Activated naive CD4-positive, alpha-beta T cell treated with anti-CD3 and anti-CD28 coated beads for 36 hours (primary cell): ENCODE measurements at regions of chr5 and their contacts with region 1.

Region 1: DNA sequence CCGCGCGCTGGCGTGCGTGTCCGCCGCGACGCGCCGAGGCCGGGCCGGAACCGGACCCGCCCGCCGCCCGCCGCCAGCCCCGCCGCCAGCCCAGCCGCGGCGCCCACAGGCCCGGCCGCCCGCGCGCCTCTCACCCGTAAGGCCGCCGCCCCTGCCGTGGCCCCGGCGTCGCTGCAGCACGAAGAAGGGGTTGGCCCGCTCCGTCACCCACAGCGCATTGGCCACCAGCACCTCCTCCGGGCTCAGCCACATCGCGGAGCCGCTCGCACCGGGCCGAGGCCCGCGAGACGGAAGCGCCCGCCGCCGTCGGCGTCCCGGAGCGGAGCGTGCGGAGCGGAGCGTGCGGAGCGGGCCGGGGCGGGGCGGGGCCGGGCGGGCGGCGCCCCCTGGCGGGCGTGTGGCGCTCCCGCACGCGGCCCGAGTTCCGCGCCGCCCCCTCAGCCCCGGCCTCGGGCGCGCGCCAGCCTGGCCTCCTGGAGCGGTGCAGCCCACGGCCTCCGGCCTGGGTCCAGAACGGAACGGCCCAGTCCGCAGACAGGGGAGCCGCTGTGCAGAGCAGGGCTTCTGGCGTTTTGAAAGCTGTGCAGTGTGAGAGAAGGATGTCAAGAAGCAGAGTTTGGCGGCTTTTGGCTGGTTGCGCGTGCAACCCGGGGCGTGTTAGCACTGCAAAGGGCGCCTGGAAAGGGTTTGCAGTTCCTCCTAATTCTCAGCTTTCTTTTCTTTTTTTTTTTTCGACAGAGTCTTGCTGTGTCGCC is at the start of gene TBC1D9B:
- DNase-seq: peak; percentile 62
- H3K4me3 Mint-ChIP-seq: peak within 1 kb of the TSS; percentile 85
- H3K27ac Mint-ChIP-seq: no peak within 1 kb of the TSS
- H3K4me1 Mint-ChIP-seq: peaks cover 11% of the 10 kb centered on the region
- H3K27me3 Mint-ChIP-seq: no peaks in the 10 kb centered on the region
- total RNA-seq, gene TBC1D9B: 40.2 to 40.4 TPM

Region 2: DNA sequence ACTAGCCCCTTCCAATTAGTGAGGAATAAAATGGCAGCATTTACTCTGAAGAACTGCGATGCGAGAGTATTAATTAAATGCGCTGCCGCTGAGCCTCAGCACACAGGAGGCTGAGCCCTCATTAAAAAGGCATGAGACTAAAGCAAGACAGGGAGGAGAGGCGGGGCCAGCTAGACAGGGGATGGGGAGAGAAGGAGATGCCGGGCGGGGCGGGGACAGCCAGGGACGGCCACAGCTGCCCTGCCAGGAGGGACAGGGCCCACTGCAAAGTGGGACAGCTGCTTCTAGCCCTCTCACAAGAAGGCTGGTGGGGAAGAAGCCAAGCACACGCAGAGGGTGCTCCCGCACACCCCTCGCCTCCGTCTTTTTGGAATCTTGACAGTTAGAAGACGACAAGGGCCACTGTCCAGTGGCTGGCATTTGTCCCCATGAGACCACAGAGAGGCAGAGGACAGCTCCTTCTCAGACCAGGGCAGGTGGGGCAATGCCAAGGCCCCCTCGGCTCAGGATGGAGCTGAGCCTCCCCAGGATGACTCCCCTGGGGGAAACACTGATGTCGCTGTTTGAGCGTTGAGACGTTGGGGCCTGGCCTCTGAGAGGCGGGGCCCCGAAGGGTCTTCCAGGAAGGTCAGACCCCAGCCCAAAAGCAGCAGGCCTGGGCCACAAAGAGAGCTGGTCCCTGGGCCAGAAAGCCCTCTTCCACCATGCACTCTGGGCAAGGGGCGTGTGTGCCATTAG is 589.4 kb before region 1 on chr5:
- CTCF ChIA-PET with region 1: no interaction called
- intact Hi-C with region 1: no loop called
- DNase-seq: no peak
- H3K4me3 Mint-ChIP-seq: no peak overlapping the region
- H3K27ac Mint-ChIP-seq: no peak overlapping the region
- H3K4me1 Mint-ChIP-seq: no peaks in the 10 kb centered on the region
- H3K27me3 Mint-ChIP-seq: peaks cover 3% of the 10 kb centered on the region

Region 3: GRCh38 chr5:179678223-179679013 is 229.3 kb before region 1 on chr5:
- CTCF ChIA-PET with region 1: no interaction called
- intact Hi-C with region 1: loop called (anchors 2 kb)
- DNase-seq: peak; percentile 94
- H3K4me3 Mint-ChIP-seq: peak overlapping the region; percentile 99
- H3K27ac Mint-ChIP-seq: peak overlapping the region; percentile 95
- H3K4me1 Mint-ChIP-seq: peaks cover 36% of the 10 kb centered on the region
- H3K27me3 Mint-ChIP-seq: no peaks in the 10 kb centered on the region

Region 4: GRCh38 chr5:179763215-179763945 is 144.4 kb before region 1 on chr5:
- CTCF ChIA-PET with region 1: interaction called, 4 read pairs
- intact Hi-C with region 1: loop called (anchors 1 kb)
- DNase-seq: peak; percentile 75
- H3K4me3 Mint-ChIP-seq: no peak overlapping the region
- H3K27ac Mint-ChIP-seq: no peak overlapping the region
- H3K4me1 Mint-ChIP-seq: peaks cover 61% of the 10 kb centered on the region
- H3K27me3 Mint-ChIP-seq: no peaks in the 10 kb centered on the region

Region 5: GRCh38 chr5:179806250-179807222 is 101.2 kb before region 1 on chr5 and contains the start of gene MGAT4B:
- CTCF ChIA-PET with region 1: interaction called, 10 read pairs
- intact Hi-C with region 1: loop called (anchors 1 kb)
- DNase-seq: peak; percentile 62
- H3K4me3 Mint-ChIP-seq: peak within 1 kb of the TSS; percentile 84
- H3K27ac Mint-ChIP-seq: no peak within 1 kb of the TSS
- H3K4me1 Mint-ChIP-seq: peaks cover 38% of the 10 kb centered on the region
- H3K27me3 Mint-ChIP-seq: no peaks in the 10 kb centered on the region
- total RNA-seq, gene MGAT4B: 57.7 to 59.9 TPM

Region 6: GRCh38 chr5:179858586-179859427 is 48.9 kb before region 1 on chr5 and contains the start of gene MRNIP:
- CTCF ChIA-PET with region 1: no interaction called
- intact Hi-C with region 1: loop called (anchors 2 kb)
- DNase-seq: peak; percentile 93
- H3K4me3 Mint-ChIP-seq: peak within 1 kb of the TSS; percentile 93
- H3K27ac Mint-ChIP-seq: peak within 1 kb of the TSS; percentile 82
- H3K4me1 Mint-ChIP-seq: peaks cover 14% of the 10 kb centered on the region
- H3K27me3 Mint-ChIP-seq: no peaks in the 10 kb centered on the region
- total RNA-seq, gene MRNIP: 16.2 to 16.3 TPM

Region 7: DNA sequence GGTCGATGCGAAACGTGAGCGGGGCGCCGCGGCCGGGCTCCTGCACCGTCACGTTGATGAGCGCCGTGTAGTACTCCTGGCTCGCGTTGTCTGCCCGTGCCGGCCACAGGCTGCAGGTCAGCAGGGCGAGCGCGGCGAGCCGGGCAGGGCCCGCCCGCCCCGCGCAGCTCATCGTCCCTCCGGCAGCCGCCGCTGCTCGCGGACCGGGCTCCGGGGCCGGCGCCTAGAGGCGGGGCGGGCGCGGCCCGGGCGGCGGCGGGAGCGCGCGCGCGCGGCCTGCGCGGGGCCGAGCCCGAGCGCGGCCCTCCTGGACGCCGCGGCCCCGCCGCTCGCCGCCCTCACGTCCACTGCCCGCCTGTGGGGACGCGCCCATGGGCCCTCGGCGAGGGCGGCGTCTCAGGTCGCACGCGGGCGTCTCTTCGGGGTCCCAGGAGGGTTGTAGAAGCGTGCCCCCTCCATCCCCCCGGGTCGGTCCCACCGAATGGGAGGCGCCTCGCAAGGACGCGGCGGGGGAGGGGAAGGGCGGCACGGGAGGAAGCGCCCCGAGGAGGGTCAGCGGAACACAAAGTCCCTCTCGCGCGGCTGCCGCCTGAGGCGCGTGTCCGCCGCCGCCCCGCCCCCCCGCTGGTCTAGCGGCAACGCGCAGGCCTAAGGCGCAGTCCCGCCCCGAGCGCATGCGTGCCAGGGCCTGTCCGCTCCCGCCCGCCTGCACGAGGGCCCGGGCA is 163.9 kb after region 1 on chr5 and contains the start of gene RNF130:
- CTCF ChIA-PET with region 1: no interaction called
- intact Hi-C with region 1: loop called (anchors 5 kb)
- DNase-seq: peak; percentile 86
- H3K4me3 Mint-ChIP-seq: peak within 1 kb of the TSS; percentile 75
- H3K27ac Mint-ChIP-seq: peak within 1 kb of the TSS; percentile 32
- H3K4me1 Mint-ChIP-seq: peaks cover 23% of the 10 kb centered on the region
- H3K27me3 Mint-ChIP-seq: peaks cover 3% of the 10 kb centered on the region
- total RNA-seq, gene RNF130: 10.3 to 11.9 TPM